Activated T-helper 1 cell treated with anti-CD3 and anti-CD28 coated beads, Interleukin-12 subunit alpha, Interleukin-12 subunit beta, Interleukin-2, Interleukin-4 antibody, amounts not matched to agents 30 ng/mL and 10 ng/mL and 1 ng/mL, durations not matched to agents 14 hours and 24 hours and 36 hours (primary cell): ENCODE measurements at regions of chr6 and their contacts with region 1.

Region 1: GRCh38 chr6:33620856-33621710 is at the start of gene ITPR3:
- DNase-seq: peak; percentile 68
- H3K4me3 Mint-ChIP-seq: peak within 1 kb of the TSS; percentile 96
- H3K27ac Mint-ChIP-seq: peak within 1 kb of the TSS; percentile 90
- H3K4me1 Mint-ChIP-seq: peaks cover 49% of the 10 kb centered on the region
- H3K27me3 Mint-ChIP-seq: no peaks in the 10 kb centered on the region
- total RNA-seq, gene ITPR3: 42.7 and 42.9 TPM in 2 replicates

Region 2: GRCh38 chr6:33095681-33096080 is 525.4 kb before region 1 on chr6:
- intact Hi-C with region 1: no loop called
- DNase-seq: no peak
- H3K4me3 Mint-ChIP-seq: no peak overlapping the region
- H3K27ac Mint-ChIP-seq: no peak overlapping the region
- H3K4me1 Mint-ChIP-seq: no peaks in the 10 kb centered on the region
- H3K27me3 Mint-ChIP-seq: peaks cover 28% of the 10 kb centered on the region

Region 3: DNA sequence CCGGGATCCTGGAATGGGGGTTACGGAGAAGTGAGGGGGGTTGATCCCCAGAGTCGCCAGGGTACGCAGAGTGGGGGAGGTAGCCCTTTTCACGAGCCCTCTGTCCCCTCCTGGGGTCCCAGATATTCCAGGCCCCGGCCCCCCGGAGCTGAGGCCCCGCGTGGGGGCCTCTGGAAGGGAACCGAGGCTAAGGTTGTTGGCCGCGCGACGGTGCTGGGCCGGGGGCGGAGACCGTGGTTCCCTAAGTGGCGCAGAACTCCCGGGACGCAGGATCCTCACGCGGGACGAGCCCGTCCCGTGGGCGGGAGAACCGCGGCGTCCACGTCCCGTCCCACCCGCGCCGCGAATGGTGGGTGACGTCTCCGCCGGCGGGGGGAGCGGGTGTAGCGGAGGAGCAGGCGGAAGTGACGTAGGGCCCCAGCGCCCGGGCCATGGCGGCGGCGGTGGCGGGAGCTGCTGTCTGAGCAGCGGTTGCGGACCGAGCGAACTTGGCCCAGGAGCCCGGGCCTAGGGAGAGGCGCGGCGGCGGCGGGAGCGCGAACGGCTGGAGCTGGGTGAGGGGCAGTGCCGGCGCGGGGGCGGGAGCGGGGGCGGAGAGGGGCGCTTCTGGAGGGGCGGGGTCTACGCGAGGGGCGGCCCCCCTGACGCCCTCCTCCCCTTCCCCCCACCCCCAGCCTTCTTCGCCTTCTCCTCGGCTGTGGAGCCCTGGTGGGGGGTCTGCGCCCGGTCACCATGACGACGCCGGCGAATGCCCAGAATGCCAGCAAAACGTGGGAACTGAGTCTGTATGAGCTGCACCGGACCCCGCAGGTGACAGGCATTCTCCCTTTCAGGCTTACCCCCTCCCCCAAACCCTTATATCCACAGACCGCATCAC is 412.8 kb before region 1 on chr6 and contains the start of gene RING1:
- intact Hi-C with region 1: loop called (anchors 1 kb)
- DNase-seq: peak; percentile 84
- H3K4me3 Mint-ChIP-seq: peak within 1 kb of the TSS; percentile 91
- H3K27ac Mint-ChIP-seq: peak within 1 kb of the TSS; percentile 96
- H3K4me1 Mint-ChIP-seq: peaks cover 50% of the 10 kb centered on the region
- H3K27me3 Mint-ChIP-seq: peaks cover 14% of the 10 kb centered on the region
- total RNA-seq, gene RING1: 50.7 and 53.4 TPM in 2 replicates

Region 4: GRCh38 chr6:33425668-33426577 is 195.2 kb before region 1 on chr6:
- intact Hi-C with region 1: loop called (anchors 5 kb)
- DNase-seq: peak; percentile 72
- H3K4me3 Mint-ChIP-seq: peak overlapping the region; percentile 89
- H3K27ac Mint-ChIP-seq: peak overlapping the region; percentile 92
- H3K4me1 Mint-ChIP-seq: peaks cover 77% of the 10 kb centered on the region
- H3K27me3 Mint-ChIP-seq: no peaks in the 10 kb centered on the region

Region 5: DNA sequence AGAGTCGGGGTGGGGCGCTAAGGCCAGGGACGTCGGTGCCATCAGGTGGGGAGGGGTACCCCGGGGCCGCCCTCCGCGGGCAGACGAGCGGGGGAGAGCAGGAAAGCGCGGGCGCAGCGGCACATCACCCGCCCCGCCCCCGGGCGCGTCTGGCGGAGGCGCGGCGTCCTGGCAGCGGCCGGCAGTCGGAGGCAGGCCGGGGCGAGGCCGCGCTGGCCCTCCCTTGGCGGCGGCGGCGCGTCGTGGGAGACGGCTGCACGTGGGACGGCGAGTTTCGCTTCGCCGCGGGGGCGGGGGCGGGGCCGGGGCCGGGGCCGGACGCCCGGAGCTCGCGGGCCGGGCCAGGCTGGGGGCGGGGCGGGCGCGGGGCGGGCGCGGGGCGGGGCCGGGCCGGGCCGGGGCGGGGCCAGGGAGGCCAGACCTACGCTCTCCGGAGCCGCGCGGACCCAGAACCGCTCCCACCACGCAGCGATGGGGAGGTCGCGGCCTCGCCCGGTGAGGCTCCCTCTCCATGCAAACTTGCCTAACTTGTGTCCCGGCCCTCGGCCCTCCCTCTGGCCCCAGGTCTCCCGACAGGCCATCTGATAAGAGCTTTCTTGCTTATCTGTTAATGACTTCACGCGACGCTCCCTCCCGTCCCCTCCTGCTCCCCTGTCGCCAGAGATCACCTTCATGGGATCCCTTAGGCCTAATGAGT is 12.5 kb after region 1 on chr6:
- intact Hi-C with region 1: loop called (anchors 1 kb)
- DNase-seq: peak; percentile 61
- H3K4me3 Mint-ChIP-seq: peak overlapping the region; percentile 82
- H3K27ac Mint-ChIP-seq: peak overlapping the region; percentile 90
- H3K4me1 Mint-ChIP-seq: peaks cover 65% of the 10 kb centered on the region
- H3K27me3 Mint-ChIP-seq: no peaks in the 10 kb centered on the region

Region 6: GRCh38 chr6:33694401-33694931 is 73.4 kb after region 1 on chr6:
- intact Hi-C with region 1: loop called (anchors 2 kb)
- DNase-seq: peak; percentile 22
- H3K4me3 Mint-ChIP-seq: peak overlapping the region; percentile 55
- H3K27ac Mint-ChIP-seq: peak overlapping the region; percentile 91
- H3K4me1 Mint-ChIP-seq: peaks cover 63% of the 10 kb centered on the region
- H3K27me3 Mint-ChIP-seq: no peaks in the 10 kb centered on the region

Region 7: GRCh38 chr6:33732826-33733708 is 112.0 kb after region 1 on chr6:
- intact Hi-C with region 1: no loop called
- DNase-seq: no peak
- H3K4me3 Mint-ChIP-seq: no peak overlapping the region
- H3K27ac Mint-ChIP-seq: no peak overlapping the region
- H3K4me1 Mint-ChIP-seq: no peaks in the 10 kb centered on the region
- H3K27me3 Mint-ChIP-seq: peaks cover 5% of the 10 kb centered on the region